ENCODE measurements at regions of chr1 and their contacts with region 1.

Region 1: DNA sequence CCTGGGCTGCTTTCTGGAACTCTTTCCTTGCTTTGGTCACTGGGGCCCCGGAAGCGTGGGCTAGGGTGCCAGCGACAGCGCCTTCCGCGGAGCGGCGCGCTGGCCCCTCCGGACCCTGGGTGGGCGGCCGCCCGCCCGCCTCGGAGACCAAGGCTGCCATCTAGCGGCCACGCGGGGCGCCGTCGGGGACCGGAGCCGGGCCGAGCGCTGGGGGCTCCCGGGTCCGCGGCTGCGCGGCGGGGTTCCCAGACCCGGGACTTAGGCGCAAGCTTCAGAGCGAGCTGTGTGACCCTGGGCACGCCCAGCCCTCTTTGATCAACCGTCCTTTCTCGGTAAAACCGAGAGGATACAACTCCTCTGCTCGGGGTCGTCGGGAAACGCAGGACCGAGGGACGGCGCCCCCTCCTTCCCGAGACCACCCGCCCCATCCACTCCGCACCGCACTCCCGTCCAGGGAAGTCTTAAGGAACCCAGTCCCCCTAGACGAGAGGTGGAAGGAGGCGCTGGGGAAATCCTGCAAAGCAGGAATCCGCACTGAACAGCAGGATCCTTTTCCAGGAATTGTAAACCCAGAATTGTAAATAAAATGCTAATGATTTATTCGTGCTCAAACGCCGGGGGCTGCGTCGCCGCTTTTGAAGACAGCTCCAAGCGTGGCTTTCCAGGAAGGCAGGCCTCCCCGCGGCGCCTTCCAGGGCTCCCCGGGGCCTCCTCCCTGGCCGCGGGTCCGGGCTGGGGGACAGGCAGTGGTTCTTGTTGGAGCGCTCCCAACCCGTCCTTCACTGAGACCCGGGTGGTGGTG is 41.2 kb downstream of the RRAGC start:
- DNase-seq: peak in 13 of 14 experiments; percentile 11 to 62 (median 37)
- ATAC-seq: peak; percentile 48
- H3K4me3 ChIP-seq: peak overlapping the region; percentile 26
- H3K4me3 Mint-ChIP-seq: peak overlapping the region; percentile 51
- H3K27ac ChIP-seq: no peak overlapping the region
- H3K27ac Mint-ChIP-seq: no peak overlapping the region
- H3K4me1 ChIP-seq: peaks cover 16% of the 10 kb centered on the region
- H3K4me1 Mint-ChIP-seq: peaks cover 12% of the 10 kb centered on the region
- H3K27me3 ChIP-seq: peaks cover 57 to 87% of the 10 kb centered on the region in 2 experiments
- H3K27me3 Mint-ChIP-seq: peaks cover 91% of the 10 kb centered on the region
- CTCF ChIP-seq: peak; percentile 71

Region 2: DNA sequence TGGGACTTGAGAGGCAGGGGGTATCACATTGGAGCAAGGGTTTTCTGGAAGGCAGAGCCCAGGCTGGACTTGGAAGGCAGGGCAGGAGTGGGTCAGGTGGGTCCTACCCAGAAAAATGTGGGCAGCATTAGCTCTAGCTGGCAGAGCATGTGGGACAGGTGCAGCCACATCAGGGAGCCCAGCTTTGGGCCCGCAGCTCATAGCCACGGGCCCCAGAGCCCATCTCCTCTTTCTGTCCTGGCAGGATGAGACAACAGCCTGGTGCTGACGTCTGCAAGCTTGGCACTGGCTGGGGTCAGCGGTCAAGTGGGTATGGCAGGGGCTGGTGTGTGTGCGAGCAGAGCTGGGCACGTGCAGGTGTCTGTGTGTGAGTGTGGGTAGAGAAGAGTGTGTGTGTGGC is 1938.8 kb before region 1 on chr1:
- CTCF ChIA-PET with region 1: no interaction called
- POLR2A ChIA-PET with region 1: no interaction called
- intact Hi-C with region 1: loop called in 1 of 2 experiments (anchors 5 kb)
- DNase-seq: peak in 1 of 14 experiments; percentile 15
- ATAC-seq: no peak
- H3K4me3 ChIP-seq: no peak overlapping the region
- H3K4me3 Mint-ChIP-seq: no peak overlapping the region
- H3K27ac ChIP-seq: no peak overlapping the region
- H3K27ac Mint-ChIP-seq: no peak overlapping the region
- H3K4me1 ChIP-seq: no peaks in the 10 kb centered on the region
- H3K4me1 Mint-ChIP-seq: no peaks in the 10 kb centered on the region
- H3K27me3 ChIP-seq: peaks cover 3 to 6% of the 10 kb centered on the region in 2 experiments
- H3K27me3 Mint-ChIP-seq: peaks cover 59% of the 10 kb centered on the region
- CTCF ChIP-seq: no peak

Region 3: GRCh38 chr1:38026592-38027200 is 791.7 kb before region 1 on chr1:
- CTCF ChIA-PET with region 1: interaction called, 3 read pairs
- POLR2A ChIA-PET with region 1: no interaction called
- intact Hi-C with region 1: loop called in 1 of 2 experiments (anchors 5 kb)
- DNase-seq: peak in 5 of 14 experiments; percentile 20 to 55 (median 50)
- ATAC-seq: no peak
- H3K4me3 ChIP-seq: no peak overlapping the region
- H3K4me3 Mint-ChIP-seq: no peak overlapping the region
- H3K27ac ChIP-seq: no peak overlapping the region
- H3K27ac Mint-ChIP-seq: no peak overlapping the region
- H3K4me1 ChIP-seq: peaks cover 42% of the 10 kb centered on the region
- H3K4me1 Mint-ChIP-seq: peaks cover 32% of the 10 kb centered on the region
- H3K27me3 ChIP-seq: no peaks in the 10 kb centered on the region
- H3K27me3 Mint-ChIP-seq: no peaks in the 10 kb centered on the region
- CTCF ChIP-seq: peak; percentile 19

Region 4: DNA sequence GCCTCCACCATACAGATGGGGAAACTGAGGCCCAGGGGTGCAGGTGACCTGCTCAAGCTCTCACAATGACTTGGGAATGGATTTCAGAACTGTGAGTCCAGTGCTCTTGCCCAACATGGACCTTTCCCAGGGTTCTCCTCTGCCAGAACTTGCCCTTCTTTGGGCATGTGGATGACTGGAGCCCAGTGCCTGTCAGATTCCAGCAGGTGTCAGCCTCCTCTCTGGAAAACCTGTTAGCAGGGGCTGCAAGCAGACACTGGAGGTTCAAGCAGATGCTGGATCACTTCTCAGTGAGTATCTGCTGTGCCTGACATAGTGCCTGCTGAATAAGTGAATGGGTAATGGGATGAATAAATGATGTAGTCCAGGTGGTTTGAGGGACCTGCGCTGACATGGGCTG is 457.6 kb before region 1 on chr1:
- CTCF ChIA-PET with region 1: no interaction called
- POLR2A ChIA-PET with region 1: no interaction called
- intact Hi-C with region 1: loop called in 1 of 2 experiments (anchors 5 kb)
- DNase-seq: peak in 1 of 14 experiments; percentile 3
- ATAC-seq: no peak
- H3K4me3 ChIP-seq: no peak overlapping the region
- H3K4me3 Mint-ChIP-seq: no peak overlapping the region
- H3K27ac ChIP-seq: no peak overlapping the region
- H3K27ac Mint-ChIP-seq: no peak overlapping the region
- H3K4me1 ChIP-seq: no peaks in the 10 kb centered on the region
- H3K4me1 Mint-ChIP-seq: no peaks in the 10 kb centered on the region
- H3K27me3 ChIP-seq: peaks cover 3 to 4% of the 10 kb centered on the region in 2 experiments
- H3K27me3 Mint-ChIP-seq: peaks cover 5% of the 10 kb centered on the region
- CTCF ChIP-seq: no peak